Transverse colon (tissue), 4 donors: ENCODE measurements at regions of chr6 and their contacts with region 1.

Region 1: GRCh38 chr6:967696-968095 is 274.8 kb upstream of the EXOC2 start:
- DNase-seq: no peak
- H3K4me3 ChIP-seq: no peak overlapping the region
- H3K27ac ChIP-seq: no peak overlapping the region
- H3K4me1 ChIP-seq: no peaks in the 10 kb centered on the region
- H3K27me3 ChIP-seq: no peaks in the 10 kb centered on the region
- CTCF ChIP-seq: no peak
- EP300 ChIP-seq: no peak
- POLR2A ChIP-seq: no peak

Region 2: GRCh38 chr6:1031671-1032070 is 64.0 kb after region 1 on chr6:
- in situ Hi-C with region 1: no loop called
- intact Hi-C with region 1: loop called (anchors 2 kb)
- DNase-seq: no peak
- H3K4me3 ChIP-seq: no peak overlapping the region
- H3K27ac ChIP-seq: no peak overlapping the region
- H3K4me1 ChIP-seq: no peaks in the 10 kb centered on the region
- H3K27me3 ChIP-seq: no peaks in the 10 kb centered on the region
- CTCF ChIP-seq: no peak
- EP300 ChIP-seq: no peak
- POLR2A ChIP-seq: no peak